PC-3 (cell line): ENCODE measurements at regions of chr7 and their contacts with region 1.

Region 1: DNA sequence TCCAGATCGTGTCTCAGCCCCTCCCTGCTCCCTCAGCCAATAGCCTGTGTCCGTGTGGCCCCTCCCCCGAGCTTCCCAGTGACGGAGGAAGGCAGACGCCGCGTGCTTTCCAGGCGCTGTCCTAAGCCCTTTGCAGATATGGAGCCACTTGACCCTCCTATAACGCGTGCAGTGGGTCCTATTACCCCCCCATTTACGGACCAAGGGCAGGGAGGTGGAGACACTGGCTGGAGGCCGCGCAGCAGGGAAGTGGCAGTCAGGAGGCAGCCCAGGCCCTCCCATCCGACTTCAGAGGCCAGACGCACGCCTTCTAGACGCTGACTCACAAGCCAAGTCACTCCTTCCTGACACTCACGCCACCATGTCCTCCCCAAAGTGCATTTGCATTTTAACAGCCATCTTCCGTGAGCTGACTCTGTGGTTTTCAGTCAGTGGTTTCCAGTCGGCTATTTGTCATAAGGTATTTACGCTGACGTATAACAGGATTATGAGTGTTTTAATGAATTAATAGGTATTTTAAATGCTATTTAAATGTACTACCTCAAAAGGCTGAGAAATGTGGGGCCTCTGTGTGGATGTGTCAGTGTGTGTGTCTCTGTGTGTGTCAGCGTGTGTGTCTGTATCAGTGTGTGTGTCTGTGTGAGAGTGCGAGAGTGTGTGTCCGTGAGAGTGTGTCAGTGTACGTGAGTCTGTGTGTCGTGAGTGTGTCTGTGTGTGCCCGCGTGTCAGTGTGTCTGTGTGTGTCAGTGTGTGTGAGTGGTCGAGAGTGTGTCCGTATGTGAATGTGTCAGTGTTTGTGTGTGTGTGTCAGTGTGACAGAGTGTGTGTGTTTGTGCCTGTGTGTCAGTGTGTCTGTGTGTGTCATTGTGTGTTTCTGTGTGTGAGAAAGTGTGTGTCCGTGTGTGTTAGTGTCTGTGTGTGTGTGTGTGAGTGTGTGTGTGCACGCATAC is 92.0 kb upstream of the INSIG1 start:
- DNase-seq: peak; percentile 94
- ATAC-seq: peak; percentile 87
- H3K4me3 ChIP-seq: peak overlapping the region; percentile 62
- H3K27ac ChIP-seq: peak overlapping the region; percentile 97
- H3K4me1 ChIP-seq: peaks cover 42% of the 10 kb centered on the region
- H3K27me3 ChIP-seq: no peaks in the 10 kb centered on the region
- CTCF ChIP-seq: no peak

Region 2: GRCh38 chr7:155230168-155230593 is 24.5 kb after region 1 on chr7:
- CTCF ChIA-PET with region 1: no interaction called
- POLR2A ChIA-PET with region 1: interaction called, 12 read pairs
- intact Hi-C with region 1: loop called (anchors 1 kb)
- DNase-seq: peak; percentile 98
- ATAC-seq: peak; percentile 99
- H3K4me3 ChIP-seq: no peak overlapping the region
- H3K27ac ChIP-seq: peak overlapping the region; percentile 83
- H3K4me1 ChIP-seq: peaks cover 34% of the 10 kb centered on the region
- H3K27me3 ChIP-seq: no peaks in the 10 kb centered on the region
- CTCF ChIP-seq: no peak